ENCODE measurements at regions of chr17 and their contacts with region 1.

Region 1: DNA sequence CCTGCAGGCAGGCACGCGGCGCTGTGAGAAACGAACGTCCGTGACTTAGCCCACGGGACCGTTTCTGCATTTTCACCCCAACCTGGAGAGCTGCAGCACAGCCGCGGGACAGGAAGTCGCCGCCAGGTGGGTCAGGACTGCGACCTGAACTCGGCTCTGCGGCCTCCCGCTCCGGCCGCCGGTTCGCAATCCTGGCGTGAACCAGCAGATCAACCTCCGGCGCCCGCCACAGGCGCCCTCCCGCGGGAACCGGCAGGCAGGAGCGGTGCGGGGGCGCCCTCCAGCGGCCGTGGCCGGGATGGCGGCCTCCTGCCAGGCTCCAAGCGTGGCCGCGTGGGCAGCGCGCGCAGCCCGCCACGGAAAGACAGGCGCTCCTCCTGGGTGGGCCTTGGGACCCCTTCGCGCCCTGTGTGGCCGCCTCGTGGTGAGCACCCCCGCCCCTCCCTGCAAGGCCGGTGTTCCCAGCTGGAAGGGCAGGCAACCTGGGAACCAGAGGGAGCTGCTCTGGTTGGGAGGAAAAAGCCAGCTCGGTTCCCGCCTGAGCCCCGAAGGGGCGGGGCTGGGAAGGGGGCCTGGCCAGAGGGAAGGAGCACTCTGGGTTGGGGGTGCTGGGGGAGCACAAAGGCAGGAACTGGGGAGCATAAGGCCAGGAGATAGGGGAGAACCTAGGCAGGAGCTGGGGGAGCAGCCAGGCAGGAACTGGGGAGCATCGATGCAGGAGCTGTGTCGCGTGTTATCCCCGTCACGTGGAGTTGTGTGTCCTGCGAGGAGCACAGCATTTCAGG is 28.2 kb downstream of the ACTG1 start:
- DNase-seq: peak; percentile 84 to 93 (median 89)
- H3K4me3 ChIP-seq: peak overlapping the region; percentile 37
- H3K27ac ChIP-seq: no peak overlapping the region
- H3K4me1 ChIP-seq: peaks cover 10% of the 10 kb centered on the region
- H3K27me3 ChIP-seq: no peaks in the 10 kb centered on the region
- CTCF ChIP-seq: peak; percentile 99 to 100 (median 100)
- EP300 ChIP-seq: no peak
- POLR2A ChIP-seq: peak; percentile 19

Region 2: DNA sequence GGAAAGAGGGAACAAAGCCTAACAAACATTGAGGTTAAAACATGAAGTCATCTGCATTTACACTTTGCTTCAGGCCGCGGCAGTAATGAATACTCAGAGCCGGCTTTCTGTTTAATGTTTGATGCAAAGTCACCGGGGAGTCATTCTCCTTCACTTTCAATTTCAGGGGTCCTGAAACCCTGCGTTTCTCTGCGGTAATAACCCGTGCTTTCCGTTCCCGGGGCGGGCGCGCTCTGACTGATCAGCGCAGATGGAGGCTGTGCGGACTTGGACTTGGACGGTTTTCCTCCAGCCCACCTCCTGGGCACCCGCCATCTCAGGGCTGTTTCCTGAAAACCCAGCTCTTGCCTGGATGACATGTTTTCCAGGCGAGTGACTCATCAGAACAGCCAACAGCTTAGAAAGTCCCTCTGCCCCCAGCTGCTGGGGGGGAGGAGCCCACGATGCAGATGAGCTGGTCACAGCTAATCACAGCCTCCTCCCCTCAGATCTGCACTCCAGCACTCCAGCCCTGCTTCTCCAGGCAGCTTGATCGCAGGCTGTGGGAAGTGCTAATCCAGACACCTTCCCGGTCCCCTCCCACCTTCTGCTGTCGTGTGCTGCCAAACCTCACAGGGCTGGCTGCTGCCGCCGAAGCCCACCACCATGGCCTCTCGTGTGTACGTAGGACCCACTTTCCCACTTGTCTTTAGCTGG is 651.4 kb before region 1 on chr17:
- intact Hi-C with region 1: no loop called
- DNase-seq: peak; percentile 85 to 92 (median 86)
- H3K4me3 ChIP-seq: peak overlapping the region; percentile 48
- H3K27ac ChIP-seq: peak overlapping the region; percentile 46 to 85
- H3K4me1 ChIP-seq: peaks cover 5% of the 10 kb centered on the region
- H3K27me3 ChIP-seq: no peaks in the 10 kb centered on the region
- CTCF ChIP-seq: no peak
- EP300 ChIP-seq: peak; percentile 59
- POLR2A ChIP-seq: peak; percentile 63

Region 3: DNA sequence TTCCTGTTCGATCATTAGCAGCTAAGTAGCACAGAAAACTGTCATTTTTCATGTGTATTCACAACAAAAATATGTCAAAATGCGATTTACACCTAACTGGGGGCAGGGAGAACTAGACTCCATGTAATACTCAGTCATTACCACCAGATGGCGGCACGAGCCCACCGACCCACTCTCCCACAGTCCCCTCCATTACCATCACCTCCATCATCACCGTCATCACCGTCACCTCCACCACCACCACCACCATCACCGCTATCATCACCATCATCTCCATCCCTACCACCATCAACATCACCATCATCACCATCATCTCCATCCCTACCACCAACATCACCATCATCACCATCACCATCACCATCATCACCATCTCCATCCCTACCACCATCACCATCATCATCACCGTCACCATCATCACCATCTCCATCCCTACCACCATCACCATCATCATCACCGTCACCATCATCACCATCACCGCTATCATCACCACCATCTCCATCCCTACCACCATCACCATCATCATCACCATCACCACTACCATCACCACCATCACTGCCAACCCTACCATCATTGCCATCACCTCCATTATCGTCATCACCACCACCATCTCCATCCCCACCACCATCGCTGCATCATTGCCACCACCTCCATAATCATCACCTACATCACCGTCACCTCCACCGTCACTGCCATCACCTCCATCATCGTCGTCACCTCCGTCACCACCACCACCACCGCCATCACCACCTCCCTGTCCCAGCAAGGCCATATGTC is 230.8 kb before region 1 on chr17:
- intact Hi-C with region 1: loop called (anchors 2 kb)
- DNase-seq: peak in 2 of 5 donors; percentile 47 to 72
- H3K4me3 ChIP-seq: no peak overlapping the region
- H3K27ac ChIP-seq: no peak overlapping the region
- H3K4me1 ChIP-seq: peaks cover 3% of the 10 kb centered on the region
- H3K27me3 ChIP-seq: no peaks in the 10 kb centered on the region
- CTCF ChIP-seq: peak; percentile 57 to 92 (median 90)
- EP300 ChIP-seq: no peak
- POLR2A ChIP-seq: peak; percentile 31

Region 4: GRCh38 chr17:81294856-81295680 is 189.3 kb before region 1 on chr17 and contains the start of gene SLC38A10:
- intact Hi-C with region 1: loop called in 1 of 4 experiments (anchors 5 kb)
- DNase-seq: peak; percentile 90 to 94 (median 93)
- H3K4me3 ChIP-seq: peak within 1 kb of the TSS; percentile 65
- H3K27ac ChIP-seq: peak within 1 kb of the TSS; percentile 83 to 92
- H3K4me1 ChIP-seq: peaks cover 4% of the 10 kb centered on the region
- H3K27me3 ChIP-seq: no peaks in the 10 kb centered on the region
- CTCF ChIP-seq: no peak
- EP300 ChIP-seq: peak; percentile 6
- POLR2A ChIP-seq: peak; percentile 93
- total RNA-seq, gene SLC38A10: 46.6 to 75.7 (median 68.8) TPM

Region 5: GRCh38 chr17:81339534-81340296 is 144.7 kb before region 1 on chr17:
- intact Hi-C with region 1: loop called in 1 of 4 experiments (anchors 5 kb)
- DNase-seq: peak in 1 of 5 donors; percentile 48
- H3K4me3 ChIP-seq: no peak overlapping the region
- H3K27ac ChIP-seq: peak overlapping the region in 1 of 2 donors; percentile 59
- H3K4me1 ChIP-seq: peaks cover 27% of the 10 kb centered on the region
- H3K27me3 ChIP-seq: no peaks in the 10 kb centered on the region
- CTCF ChIP-seq: no peak
- EP300 ChIP-seq: no peak
- POLR2A ChIP-seq: no peak

Region 6: DNA sequence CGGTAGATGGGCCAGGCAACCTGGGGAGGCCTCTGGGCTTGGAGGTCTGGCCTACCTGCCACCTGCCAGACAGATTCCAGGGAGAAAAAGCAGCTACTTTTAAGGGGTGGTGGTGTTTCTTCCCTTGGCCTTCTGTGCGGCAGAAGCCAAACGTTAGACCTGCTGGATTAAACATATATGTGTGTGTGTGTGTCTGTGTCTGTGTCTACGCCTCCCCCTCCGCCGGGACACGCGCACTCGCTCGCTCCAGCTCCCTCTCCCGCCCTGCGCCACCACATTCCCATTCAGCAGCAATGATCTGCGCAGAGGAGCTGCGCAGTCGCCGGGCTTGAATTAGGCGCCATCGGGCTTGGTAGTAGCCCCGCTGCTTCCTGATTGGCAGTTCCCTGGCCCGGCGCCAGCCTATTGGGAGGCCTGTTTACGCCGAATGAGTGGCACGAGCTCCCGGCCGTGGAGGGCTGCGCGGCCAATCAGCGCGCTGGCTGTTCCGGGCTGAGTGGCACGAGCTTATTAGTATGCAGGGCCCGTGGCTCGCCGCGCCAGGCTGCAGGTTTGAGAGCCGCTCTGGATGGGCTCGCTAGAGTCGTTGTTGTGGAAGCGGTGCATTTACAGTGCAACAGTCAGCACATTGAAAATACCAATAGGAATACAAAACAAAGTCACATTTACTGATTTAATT is 89.3 kb before region 1 on chr17 and contains the start of gene BAHCC1:
- intact Hi-C with region 1: loop called (anchors 5 to 10 kb)
- DNase-seq: peak; percentile 100
- H3K4me3 ChIP-seq: peak within 1 kb of the TSS; percentile 75
- H3K27ac ChIP-seq: peak within 1 kb of the TSS; percentile 87 to 94
- H3K4me1 ChIP-seq: peaks cover 24% of the 10 kb centered on the region
- H3K27me3 ChIP-seq: no peaks in the 10 kb centered on the region
- CTCF ChIP-seq: no peak
- EP300 ChIP-seq: no peak
- POLR2A ChIP-seq: peak; percentile 95
- total RNA-seq, gene BAHCC1: 7.6 to 31.9 (median 24.2) TPM

Region 7: GRCh38 chr17:81401723-81402529 is 82.5 kb before region 1 on chr17:
- intact Hi-C with region 1: loop called in 3 of 4 experiments (anchors 5 to 10 kb)
- DNase-seq: peak in 1 of 5 donors; percentile 58
- H3K4me3 ChIP-seq: no peak overlapping the region
- H3K27ac ChIP-seq: peak overlapping the region; percentile 4 to 37
- H3K4me1 ChIP-seq: peaks cover 30% of the 10 kb centered on the region
- H3K27me3 ChIP-seq: no peaks in the 10 kb centered on the region
- CTCF ChIP-seq: no peak
- EP300 ChIP-seq: no peak
- POLR2A ChIP-seq: no peak

Region 8: GRCh38 chr17:81428948-81429774 is 55.2 kb before region 1 on chr17:
- intact Hi-C with region 1: loop called in 1 of 4 experiments (anchors 10 kb)
- DNase-seq: peak; percentile 83 to 96 (median 91)
- H3K4me3 ChIP-seq: peak overlapping the region; percentile 20
- H3K27ac ChIP-seq: no peak overlapping the region
- H3K4me1 ChIP-seq: peaks cover 19% of the 10 kb centered on the region
- H3K27me3 ChIP-seq: no peaks in the 10 kb centered on the region
- CTCF ChIP-seq: no peak
- EP300 ChIP-seq: no peak
- POLR2A ChIP-seq: no peak

Measured in ovary (tissue), 10 donors.